ENCODE measurements at regions of chr13 and their contacts with region 1.

Region 1: DNA sequence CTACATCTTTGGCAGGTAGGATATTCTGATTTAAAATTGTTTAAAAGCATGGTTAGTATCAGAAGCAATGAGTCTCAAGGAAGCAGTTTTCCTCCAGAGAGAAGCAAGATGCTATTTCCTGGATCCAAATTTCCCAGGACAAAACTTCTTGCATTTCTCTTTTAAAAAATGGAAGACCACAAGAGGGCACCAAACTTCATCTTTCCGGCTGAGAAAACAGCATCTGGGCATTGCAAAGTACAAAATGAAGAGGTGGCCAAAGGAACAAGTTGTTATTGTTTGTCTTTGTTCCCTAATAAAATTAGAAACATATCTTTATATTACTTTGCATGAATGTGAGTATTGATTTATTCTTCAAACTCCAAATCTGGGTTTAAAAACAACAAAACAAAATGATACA is 60.0 kb upstream of the LRCH1 start:
- DNase-seq: peak; percentile 63
- H3K4me3 ChIP-seq: no peak overlapping the region
- H3K27ac ChIP-seq: no peak overlapping the region
- H3K4me1 ChIP-seq: no peaks in the 10 kb centered on the region
- CTCF ChIP-seq: peak; percentile 97

Region 2: GRCh38 chr13:46546089-46546797 is 53.3 kb after region 1 on chr13:
- CTCF ChIA-PET with region 1: no interaction called
- POLR2A ChIA-PET with region 1: no interaction called
- intact Hi-C with region 1: loop called (anchors 5 kb)
- DNase-seq: no peak
- H3K4me3 ChIP-seq: no peak overlapping the region
- H3K27ac ChIP-seq: no peak overlapping the region
- H3K4me1 ChIP-seq: peaks cover 4% of the 10 kb centered on the region
- CTCF ChIP-seq: no peak

Region 3: DNA sequence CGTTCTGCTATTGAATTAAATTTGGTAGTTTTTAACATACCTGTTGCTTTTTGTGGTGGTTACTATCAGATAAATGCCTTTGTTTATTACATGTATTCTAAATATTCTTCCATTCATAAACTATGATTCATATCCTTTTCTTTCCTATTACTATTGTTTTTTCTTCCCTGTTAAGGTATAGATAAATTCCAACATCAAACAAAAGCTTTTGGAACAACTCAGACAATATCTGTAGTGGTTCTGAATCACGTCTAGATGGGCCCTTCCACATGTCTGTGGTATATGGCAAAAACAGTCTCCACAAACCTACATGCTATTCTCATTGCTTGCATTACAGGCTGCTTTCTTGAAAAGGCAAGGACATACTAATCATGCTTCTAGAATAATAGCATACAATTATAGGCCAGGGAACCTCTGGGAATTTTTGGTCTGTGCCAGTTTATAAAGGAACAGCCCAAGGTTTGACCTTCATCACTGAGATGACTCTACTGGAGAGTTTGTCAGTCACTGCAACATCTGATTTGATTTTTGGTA is 66.4 kb after region 1 on chr13:
- CTCF ChIA-PET with region 1: no interaction called
- POLR2A ChIA-PET with region 1: no interaction called
- intact Hi-C with region 1: no loop called
- DNase-seq: no peak
- H3K4me3 ChIP-seq: no peak overlapping the region
- H3K27ac ChIP-seq: no peak overlapping the region
- H3K4me1 ChIP-seq: peaks cover 44% of the 10 kb centered on the region
- CTCF ChIP-seq: no peak

Region 4: DNA sequence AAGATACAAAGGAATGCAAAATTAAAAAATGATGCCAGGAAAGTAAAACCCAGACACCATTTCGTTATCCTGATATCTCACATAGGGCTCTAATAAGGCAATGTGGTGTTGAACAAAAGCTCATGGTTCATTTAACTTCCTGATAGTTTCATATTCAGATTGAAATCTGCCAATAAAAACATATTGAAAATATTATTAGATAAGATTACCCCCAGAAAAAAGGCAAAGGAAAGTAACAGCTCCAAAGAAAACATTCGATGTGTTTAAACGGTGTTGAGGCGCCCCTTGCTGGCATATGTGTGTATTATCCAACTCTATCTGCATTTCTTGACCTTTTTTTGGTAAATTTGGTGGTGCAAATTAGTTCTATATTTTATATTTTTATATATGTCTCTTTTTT is 228.1 kb after region 1 on chr13:
- CTCF ChIA-PET with region 1: no interaction called
- POLR2A ChIA-PET with region 1: no interaction called
- intact Hi-C with region 1: loop called (anchors 1 kb)
- DNase-seq: peak; percentile 62
- H3K4me3 ChIP-seq: no peak overlapping the region
- H3K27ac ChIP-seq: no peak overlapping the region
- H3K4me1 ChIP-seq: peaks cover 9% of the 10 kb centered on the region
- CTCF ChIP-seq: peak; percentile 90

Region 5: DNA sequence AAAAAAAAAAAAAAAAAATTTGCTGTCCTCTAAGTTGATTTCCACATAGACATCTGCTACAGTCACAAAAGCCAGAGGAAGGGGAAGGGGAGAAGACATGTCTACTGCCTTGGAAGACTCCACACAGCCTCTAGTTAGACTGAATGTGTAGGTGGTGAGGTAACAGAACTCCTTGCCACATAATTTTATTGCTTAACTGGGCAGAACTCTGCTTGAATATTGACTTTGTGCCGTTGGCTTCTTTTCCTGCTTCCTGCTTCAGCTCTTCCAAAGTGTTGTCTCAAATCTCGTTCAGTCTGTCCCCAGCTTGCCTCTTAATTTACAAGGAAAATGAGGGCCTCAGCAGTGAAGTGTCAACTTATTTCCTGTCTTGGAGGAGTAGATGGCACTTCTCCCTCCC is 266.9 kb after region 1 on chr13:
- CTCF ChIA-PET with region 1: no interaction called
- POLR2A ChIA-PET with region 1: no interaction called
- intact Hi-C with region 1: loop called (anchors 2 kb)
- DNase-seq: peak; percentile 16
- H3K4me3 ChIP-seq: no peak overlapping the region
- H3K27ac ChIP-seq: no peak overlapping the region
- H3K4me1 ChIP-seq: peaks cover 11% of the 10 kb centered on the region
- CTCF ChIP-seq: no peak